ENCODE measurements at regions of chr5 and their contacts with region 1.

Region 1: DNA sequence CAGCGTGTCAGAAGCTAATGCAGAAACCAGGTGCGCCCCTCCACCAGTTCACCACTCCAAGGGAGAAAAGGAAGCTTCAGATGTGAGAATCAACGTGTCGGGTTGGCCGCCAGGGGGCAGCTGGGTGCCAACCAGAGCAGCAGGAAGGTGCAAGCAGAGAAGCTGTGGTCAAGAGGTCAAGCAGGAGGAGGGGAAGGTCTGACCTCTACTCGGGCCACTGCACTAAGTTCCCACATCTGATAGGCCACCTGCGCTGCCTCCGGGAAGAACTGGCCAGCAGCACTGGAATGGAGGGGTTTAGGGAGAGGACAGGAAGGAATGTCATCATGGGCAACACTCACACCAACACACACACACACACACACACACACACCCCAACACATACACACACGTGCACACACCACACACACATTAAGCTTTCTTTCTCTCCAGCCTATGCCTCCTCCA is 31.4 kb downstream of the ANXA6 start:
- DNase-seq: peak; percentile 69

Region 2: DNA sequence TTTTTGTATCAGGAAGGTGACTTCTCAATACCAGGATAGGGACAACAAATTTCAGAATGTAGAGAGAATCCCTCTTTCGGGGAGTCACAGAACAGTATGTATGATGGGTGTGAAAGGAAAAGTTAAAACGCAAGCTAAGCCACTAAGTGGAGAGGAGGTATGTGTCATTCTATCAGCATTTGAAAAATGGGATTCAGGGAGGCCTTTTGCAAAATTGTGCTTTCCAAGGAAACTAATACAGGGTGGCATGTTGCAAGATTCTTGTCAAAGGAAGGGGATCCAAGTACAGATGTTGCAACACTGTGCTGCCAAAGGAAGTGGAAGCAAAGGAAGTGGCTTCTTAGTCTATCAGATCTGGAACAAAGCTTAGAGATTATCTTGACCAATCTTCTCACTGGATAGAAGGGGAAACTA is 32.7 kb before region 1 on chr5:
- CTCF ChIA-PET with region 1: no interaction called
- POLR2A ChIA-PET with region 1: no interaction called
- DNase-seq: no peak

Region 3: GRCh38 chr5:151141535-151141934 is 15.3 kb after region 1 on chr5:
- CTCF ChIA-PET with region 1: interaction called, 10 read pairs
- POLR2A ChIA-PET with region 1: no interaction called
- DNase-seq: no peak

Region 4: DNA sequence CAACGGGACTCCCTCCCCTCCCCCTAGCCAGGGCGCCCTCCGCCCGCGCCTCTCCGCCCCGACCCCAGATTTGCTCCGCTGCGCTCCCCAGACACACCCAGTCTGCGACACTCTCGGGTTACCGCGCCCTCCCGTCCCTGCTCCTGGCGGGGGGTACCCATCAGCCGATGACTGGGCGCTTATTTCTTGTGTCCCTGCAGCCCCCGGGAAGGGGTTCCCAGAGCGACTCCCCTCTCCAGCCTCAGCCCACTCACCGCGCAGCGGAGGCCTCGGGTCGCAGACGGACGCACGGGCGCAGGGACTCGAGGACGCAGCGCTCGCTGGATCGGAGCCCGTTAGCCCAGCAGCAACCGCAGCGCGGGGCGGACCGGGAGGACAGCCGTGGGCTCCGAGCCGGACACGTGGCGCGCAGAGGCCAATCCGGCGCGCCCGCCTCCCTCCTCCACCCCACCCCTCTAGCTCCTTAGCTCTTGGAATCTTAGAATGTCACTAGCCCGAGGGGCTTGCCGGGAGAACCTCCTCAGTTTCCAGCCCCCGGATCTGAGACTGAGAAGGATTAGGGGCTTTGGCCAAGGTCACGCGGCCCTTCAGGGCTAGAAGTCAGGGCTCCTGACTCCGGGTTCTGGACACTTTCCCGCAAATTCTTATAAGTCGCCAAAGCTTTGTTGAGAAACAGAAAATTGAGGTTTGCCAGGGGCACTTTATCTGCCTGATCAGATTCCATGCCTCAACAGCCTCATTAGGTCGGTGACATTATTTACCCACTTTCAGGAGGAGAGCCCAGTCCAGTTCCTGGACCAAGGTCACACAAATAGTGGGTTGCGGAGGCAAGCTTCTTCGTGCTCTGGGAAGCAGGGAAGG is 31.4 kb after region 1 on chr5 and contains the start of gene ANXA6:
- CTCF ChIA-PET with region 1: interaction called, 91 read pairs
- POLR2A ChIA-PET with region 1: interaction called, 8 read pairs
- DNase-seq: peak; percentile 88

Region 5: GRCh38 chr5:151164686-151165392 is 38.6 kb after region 1 on chr5:
- CTCF ChIA-PET with region 1: interaction called, 91 read pairs
- POLR2A ChIA-PET with region 1: interaction called, 4 read pairs
- DNase-seq: peak; percentile 73

Region 6: DNA sequence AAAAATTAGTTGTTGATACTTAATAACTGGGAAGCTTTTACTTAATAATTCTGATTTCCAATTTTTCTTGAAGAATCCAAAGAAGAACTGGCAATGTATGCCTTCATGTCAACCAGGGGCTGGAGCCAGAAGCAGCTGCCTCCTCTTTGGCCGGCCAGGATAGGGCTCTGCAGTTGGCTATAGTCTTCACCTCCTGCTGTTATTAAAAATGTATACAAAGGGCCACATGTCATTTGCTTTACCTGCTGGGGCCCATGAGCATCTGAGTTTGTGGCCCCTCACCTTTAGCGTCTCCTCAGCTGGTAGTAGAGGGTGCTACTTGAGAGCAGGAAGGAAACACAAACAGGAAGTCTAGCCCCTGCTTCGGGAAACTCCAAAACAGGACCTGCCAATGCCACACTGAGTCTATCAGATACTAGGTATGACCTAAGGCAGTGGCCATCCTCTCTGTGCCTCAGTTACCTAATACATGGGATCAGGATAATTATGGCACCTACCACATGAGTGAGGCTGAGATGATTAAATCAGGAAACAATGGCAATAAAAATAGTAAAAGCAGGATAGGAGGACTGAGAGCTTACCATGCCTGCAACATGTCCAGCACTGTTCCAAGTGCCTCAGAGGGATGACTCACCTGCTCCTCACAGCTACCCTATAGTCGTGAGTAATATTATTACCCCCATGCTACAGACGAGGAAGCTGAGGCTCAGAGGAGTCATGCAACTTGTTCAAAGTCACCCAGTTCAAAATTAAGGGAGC is 76.3 kb after region 1 on chr5:
- CTCF ChIA-PET with region 1: no interaction called
- POLR2A ChIA-PET with region 1: no interaction called
- DNase-seq: no peak

Region 7: GRCh38 chr5:151239237-151239861 is 113.1 kb after region 1 on chr5:
- CTCF ChIA-PET with region 1: interaction called, 26 read pairs
- POLR2A ChIA-PET with region 1: interaction called, 3 read pairs
- DNase-seq: peak; percentile 76

Region 8: GRCh38 chr5:151374539-151374938 is 248.3 kb after region 1 on chr5:
- CTCF ChIA-PET with region 1: no interaction called
- POLR2A ChIA-PET with region 1: no interaction called
- DNase-seq: no peak

Measured in HEK293T (cell line).